Activated CD8-positive, alpha-beta T cell treated with anti-CD3 and anti-CD28 coated beads for 36 hours (primary cell): ENCODE measurements at regions of chr7 and their contacts with region 1.

Region 1: DNA sequence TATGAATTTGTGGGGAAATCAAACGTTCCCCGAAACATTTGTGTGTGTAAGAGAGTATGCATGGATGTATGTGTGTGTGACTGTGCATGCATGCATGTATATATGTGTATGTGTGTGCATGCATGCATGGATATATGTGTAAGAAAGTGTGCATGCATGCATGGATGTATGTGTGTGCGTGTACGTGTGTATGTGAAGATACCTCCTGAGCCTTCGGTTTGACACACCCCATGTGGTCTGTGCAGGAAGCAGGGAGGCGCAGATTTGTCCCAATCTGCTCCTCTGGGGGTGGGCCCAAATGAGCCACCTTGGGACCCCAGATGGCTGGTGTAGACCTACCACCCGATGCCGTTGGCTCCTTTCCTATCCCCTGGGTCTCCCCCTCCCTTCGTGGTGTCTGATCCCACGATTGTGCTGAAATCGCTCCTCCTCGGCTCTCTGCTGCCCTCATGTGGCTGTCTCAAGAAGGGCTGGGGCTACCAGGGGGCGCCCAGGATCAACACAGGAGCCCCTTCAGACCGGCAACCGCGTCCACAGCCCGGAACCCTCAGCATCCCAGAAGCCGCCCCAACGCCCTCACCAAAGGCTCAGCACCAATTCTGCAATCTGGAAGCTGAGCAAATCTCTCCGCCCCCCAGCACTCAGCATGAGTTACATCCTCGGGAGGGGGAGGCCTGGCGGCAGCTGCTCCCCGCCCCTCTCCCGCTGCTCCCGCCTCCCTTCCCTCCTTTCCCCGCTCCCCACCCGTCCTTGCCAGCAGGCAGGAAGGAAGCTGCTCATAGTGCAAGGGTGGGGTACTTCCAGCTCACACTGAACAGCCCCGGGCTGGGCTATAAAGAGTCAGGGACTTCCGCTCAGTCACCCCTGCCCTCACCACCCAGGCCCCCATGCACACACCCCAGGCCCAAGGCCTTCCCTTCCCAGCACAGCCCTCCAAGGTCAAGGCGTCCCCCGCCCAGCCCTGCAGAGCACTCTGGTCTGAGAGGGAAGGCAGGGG is 2.3 kb upstream of the NOS3 start:
- DNase-seq: peak; percentile 79
- ATAC-seq: peak; percentile 76
- H3K4me3 Mint-ChIP-seq: no peak overlapping the region
- H3K27ac Mint-ChIP-seq: no peak overlapping the region
- H3K4me1 Mint-ChIP-seq: peaks cover 15% of the 10 kb centered on the region
- H3K27me3 Mint-ChIP-seq: peaks cover 16% of the 10 kb centered on the region
- CTCF ChIP-seq: peak; percentile 91

Region 2: GRCh38 chr7:150876817-150877526 is 111.6 kb before region 1 on chr7:
- CTCF ChIA-PET with region 1: interaction called, 21 read pairs
- POLR2A ChIA-PET with region 1: no interaction called
- intact Hi-C with region 1: no loop called
- DNase-seq: peak; percentile 41
- ATAC-seq: no peak
- H3K4me3 Mint-ChIP-seq: no peak overlapping the region
- H3K27ac Mint-ChIP-seq: no peak overlapping the region
- H3K4me1 Mint-ChIP-seq: peaks cover 14% of the 10 kb centered on the region
- H3K27me3 Mint-ChIP-seq: peaks cover 3% of the 10 kb centered on the region
- CTCF ChIP-seq: no peak

Region 3: DNA sequence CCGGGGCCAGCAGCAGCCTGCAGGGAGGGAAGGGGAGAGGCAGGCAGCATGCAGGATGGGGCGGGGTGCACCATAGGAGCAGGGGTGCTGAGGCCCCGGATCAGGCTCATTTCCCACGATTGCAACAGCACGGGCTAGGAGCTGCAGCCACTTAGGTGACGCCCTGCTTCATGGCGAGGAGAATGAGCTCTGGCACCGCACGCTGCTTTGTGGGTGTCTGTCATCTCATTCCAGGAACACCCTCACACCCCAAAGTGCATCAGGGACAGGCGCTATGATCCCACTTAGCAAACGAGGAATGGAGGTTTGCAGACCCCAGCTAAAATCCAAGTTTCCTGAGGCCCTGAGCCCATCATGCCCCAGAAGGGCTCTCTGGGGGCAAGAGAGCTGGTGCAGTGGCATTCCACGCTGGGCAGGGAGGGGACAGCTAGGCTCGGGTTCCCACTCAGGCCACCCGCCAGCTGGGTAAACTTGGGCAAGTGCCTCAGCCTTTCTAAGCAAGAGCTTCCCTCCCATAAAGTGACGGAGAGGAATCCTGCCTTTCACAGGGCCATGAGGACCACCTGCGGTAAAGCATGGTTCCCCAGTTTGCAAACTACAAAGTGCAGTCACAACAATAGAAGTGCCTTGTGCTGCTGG is 19.7 kb before region 1 on chr7:
- CTCF ChIA-PET with region 1: interaction called, 96 read pairs
- POLR2A ChIA-PET with region 1: interaction called, 3 read pairs
- intact Hi-C with region 1: no loop called
- DNase-seq: no peak
- ATAC-seq: no peak
- H3K4me3 Mint-ChIP-seq: no peak overlapping the region
- H3K27ac Mint-ChIP-seq: no peak overlapping the region
- H3K4me1 Mint-ChIP-seq: peaks cover 3% of the 10 kb centered on the region
- H3K27me3 Mint-ChIP-seq: no peaks in the 10 kb centered on the region
- CTCF ChIP-seq: no peak

Region 4: GRCh38 chr7:151008511-151009323 is 20.2 kb after region 1 on chr7:
- CTCF ChIA-PET with region 1: interaction called, 31 read pairs
- POLR2A ChIA-PET with region 1: interaction called, 7 read pairs
- intact Hi-C with region 1: no loop called
- DNase-seq: peak; percentile 83
- ATAC-seq: peak; percentile 53
- H3K4me3 Mint-ChIP-seq: peak overlapping the region; percentile 77
- H3K27ac Mint-ChIP-seq: peak overlapping the region; percentile 86
- H3K4me1 Mint-ChIP-seq: peaks cover 49% of the 10 kb centered on the region
- H3K27me3 Mint-ChIP-seq: no peaks in the 10 kb centered on the region
- CTCF ChIP-seq: peak; percentile 83

Region 5: GRCh38 chr7:151736403-151736909 is 747.9 kb after region 1 on chr7:
- CTCF ChIA-PET with region 1: no interaction called
- POLR2A ChIA-PET with region 1: no interaction called
- intact Hi-C with region 1: no loop called
- DNase-seq: no peak
- ATAC-seq: no peak
- H3K4me3 Mint-ChIP-seq: no peak overlapping the region
- H3K27ac Mint-ChIP-seq: no peak overlapping the region
- H3K4me1 Mint-ChIP-seq: peaks cover 6% of the 10 kb centered on the region
- H3K27me3 Mint-ChIP-seq: no peaks in the 10 kb centered on the region
- CTCF ChIP-seq: no peak